Panc1 (cell line): ENCODE measurements at regions of chr7 and their contacts with region 1.

Region 1: DNA sequence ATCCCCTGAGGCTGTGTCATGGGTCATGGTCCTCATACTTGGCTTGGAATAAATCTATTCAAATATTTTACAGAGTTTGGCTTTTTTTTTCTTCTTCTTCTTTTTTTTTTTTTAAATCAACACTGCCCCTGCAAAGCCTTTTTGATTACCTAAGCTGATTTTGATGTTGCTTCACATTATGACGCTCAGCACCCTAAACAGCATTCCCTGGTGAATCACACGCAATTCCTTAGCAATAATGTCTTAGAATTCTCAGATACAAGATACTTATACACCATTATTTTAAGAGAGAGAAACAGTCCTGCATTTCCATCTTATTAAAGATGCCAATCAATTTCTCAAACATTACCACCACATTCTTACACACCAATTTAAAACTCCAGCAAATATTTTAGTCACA is 323.7 kb upstream of the IGFBP3 start:
- DNase-seq: no peak
- ATAC-seq: no peak
- H3K4me3 ChIP-seq: no peak overlapping the region
- H3K27ac ChIP-seq: no peak overlapping the region
- H3K4me1 ChIP-seq: no peaks in the 10 kb centered on the region
- H3K27me3 ChIP-seq: no peaks in the 10 kb centered on the region
- CTCF ChIP-seq: no peak

Region 2: DNA sequence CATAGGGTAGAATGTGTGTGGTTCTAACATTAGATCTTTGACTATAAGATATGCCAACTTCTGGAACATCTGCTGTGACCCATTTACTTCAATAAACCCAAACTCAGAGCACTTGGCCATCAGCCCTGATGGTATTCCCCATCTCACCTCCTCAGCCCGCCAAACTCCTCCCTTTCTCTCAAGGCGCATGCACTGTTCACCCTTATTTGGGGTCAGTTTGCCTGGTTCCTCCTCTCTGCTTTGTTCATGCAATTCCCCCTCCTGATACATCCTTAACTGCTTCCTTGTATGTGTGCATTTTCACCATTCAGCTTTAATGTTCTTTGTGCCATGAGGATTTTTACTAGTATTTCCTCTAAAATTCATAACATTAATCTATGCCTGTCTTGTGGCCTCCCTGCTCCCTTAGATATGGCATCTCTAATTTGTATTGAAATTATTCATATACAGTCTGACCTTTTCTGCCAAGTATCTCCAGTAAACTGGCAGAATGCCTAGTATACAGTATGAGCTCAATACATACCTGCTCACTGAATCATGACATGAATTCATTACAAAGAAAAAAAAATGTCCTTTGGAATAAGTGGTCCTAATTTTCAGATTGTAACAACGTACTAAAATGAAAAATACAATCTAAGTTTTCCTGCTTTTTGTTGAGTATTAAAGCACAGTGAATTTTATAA is 13.2 kb after region 1 on chr7:
- CTCF ChIA-PET with region 1: interaction called, 10 read pairs
- POLR2A ChIA-PET with region 1: interaction called, 3 read pairs
- in situ Hi-C with region 1: no loop called
- intact Hi-C with region 1: no loop called
- DNase-seq: peak; percentile 39
- ATAC-seq: peak; percentile 73; the same call in 1 of the 2 replicates
- H3K4me3 ChIP-seq: no peak overlapping the region
- H3K27ac ChIP-seq: no peak overlapping the region
- H3K4me1 ChIP-seq: no peaks in the 10 kb centered on the region
- H3K27me3 ChIP-seq: no peaks in the 10 kb centered on the region
- CTCF ChIP-seq: no peak

Region 3: DNA sequence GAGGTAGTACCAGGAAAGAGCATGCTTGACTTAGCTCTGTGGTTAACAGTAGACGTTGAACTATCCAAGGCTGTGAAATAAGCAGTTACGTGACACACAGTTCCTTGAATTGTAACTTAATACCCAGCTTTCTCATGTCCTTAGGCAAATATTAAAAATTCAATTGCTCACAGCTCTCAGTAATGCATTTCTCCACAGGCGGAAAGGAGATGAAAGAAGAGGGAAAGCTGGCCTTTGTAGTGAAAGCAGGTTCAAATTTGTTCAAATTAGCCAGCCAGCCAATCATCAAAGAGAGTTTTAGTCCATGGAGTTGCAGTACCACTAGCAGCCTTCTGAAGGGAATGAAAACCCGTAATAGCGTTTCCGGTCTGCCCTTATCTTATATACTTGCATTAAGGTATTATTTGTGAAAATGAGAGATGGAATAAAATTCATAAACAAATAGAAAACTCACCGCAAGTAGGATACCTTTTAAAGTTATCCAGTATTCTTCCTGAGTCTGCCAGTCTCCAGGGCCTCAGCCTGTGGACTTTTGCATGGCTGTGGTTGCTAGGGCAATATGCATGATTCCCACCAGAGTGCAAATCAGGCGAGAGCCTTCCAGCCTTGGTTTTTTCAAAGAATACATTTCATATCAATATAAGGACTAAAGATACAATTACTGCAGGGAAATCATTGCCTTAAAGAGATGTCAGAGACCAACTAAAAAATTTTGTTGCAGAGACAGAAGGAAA is 541.6 kb after region 1 on chr7:
- CTCF ChIA-PET with region 1: interaction called, 12 read pairs
- POLR2A ChIA-PET with region 1: no interaction called
- in situ Hi-C with region 1: no loop called
- intact Hi-C with region 1: no loop called
- DNase-seq: peak; percentile 74
- ATAC-seq: peak; percentile 81
- H3K4me3 ChIP-seq: peak overlapping the region in 1 of 2 experiments; percentile 9; a peak in 1 of 4 replicates
- H3K27ac ChIP-seq: 0 out of 2 replicates have a peak overlapping the region, but pooled peaks have one; percentile 3
- H3K4me1 ChIP-seq: no peaks in the 10 kb centered on the region
- H3K27me3 ChIP-seq: no peaks in the 10 kb centered on the region
- CTCF ChIP-seq: peak; percentile 12; the same call in 1 of the 2 replicates